ENCODE measurements at regions of chr1 and their contacts with region 1.

Region 1: DNA sequence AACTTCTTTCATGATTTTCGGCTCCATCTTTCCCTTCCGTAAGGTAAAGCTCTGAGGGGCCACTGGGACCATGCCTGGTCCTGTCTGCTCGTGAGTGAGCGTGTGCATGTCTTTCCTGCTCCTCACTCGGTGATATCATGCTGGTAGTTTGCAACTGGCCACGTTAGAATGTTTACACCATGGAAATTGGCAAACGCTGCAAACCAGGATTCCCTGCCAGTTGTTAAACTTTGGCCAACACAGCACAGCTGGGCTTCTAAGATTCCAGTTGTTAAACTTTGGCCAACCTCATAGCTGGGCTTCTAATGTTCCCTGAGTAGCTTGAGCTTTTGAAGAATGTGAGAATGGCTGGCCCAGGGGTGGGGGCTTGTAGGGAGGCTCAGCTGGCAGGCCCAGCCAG is 68.0 kb upstream of the ACTL8 start:
- DNase-seq: no peak
- H3K4me3 ChIP-seq: no peak overlapping the region
- H3K27ac ChIP-seq: no peak overlapping the region
- H3K4me1 ChIP-seq: peaks cover 4% of the 10 kb centered on the region
- H3K27me3 ChIP-seq: no peaks in the 10 kb centered on the region
- CTCF ChIP-seq: no peak

Region 2: GRCh38 chr1:17348125-17348979 is 338.8 kb before region 1 on chr1:
- CTCF ChIA-PET with region 1: no interaction called
- POLR2A ChIA-PET with region 1: no interaction called
- intact Hi-C with region 1: no loop called
- DNase-seq: no peak
- H3K4me3 ChIP-seq: no peak overlapping the region
- H3K27ac ChIP-seq: no peak overlapping the region
- H3K4me1 ChIP-seq: no peaks in the 10 kb centered on the region
- H3K27me3 ChIP-seq: no peaks in the 10 kb centered on the region
- CTCF ChIP-seq: no peak

Region 3: GRCh38 chr1:17377334-17377953 is 309.7 kb before region 1 on chr1:
- CTCF ChIA-PET with region 1: no interaction called
- POLR2A ChIA-PET with region 1: no interaction called
- intact Hi-C with region 1: no loop called
- DNase-seq: no peak
- H3K4me3 ChIP-seq: no peak overlapping the region
- H3K27ac ChIP-seq: no peak overlapping the region
- H3K4me1 ChIP-seq: no peaks in the 10 kb centered on the region
- H3K27me3 ChIP-seq: no peaks in the 10 kb centered on the region
- CTCF ChIP-seq: no peak

Region 4: DNA sequence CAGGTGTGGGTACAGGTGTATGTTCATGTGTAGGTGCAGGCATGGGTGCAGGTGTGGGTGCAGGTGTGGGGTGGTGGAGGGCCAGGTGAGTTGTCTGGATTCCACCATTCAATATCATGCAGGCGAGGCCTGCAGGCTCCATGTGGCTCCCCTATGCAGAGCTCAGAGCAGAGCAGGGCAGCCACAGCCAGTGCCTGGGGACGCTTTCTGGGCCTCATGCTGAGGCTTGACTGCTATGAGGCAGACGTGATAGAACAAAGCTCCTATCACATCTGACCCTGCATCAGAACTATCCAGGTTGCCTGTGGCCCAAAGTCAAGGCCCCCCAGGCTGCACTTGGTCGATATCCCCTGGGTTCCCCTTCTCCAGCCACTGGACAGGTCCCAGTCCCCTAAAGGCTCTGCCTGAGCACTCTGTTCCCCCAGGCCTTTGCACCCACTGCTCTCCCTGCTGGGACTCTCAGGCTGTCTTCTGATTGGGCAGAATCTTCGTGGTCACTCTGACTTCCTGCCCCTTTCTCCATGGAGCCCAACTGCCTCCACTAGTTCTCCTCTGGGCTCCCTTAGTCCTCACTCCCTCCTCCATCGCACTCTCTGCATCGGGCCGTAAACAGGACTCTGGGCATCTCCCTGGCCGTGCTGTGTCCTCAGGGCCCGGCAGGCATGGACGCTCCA is 10.6 kb before region 1 on chr1:
- CTCF ChIA-PET with region 1: no interaction called
- POLR2A ChIA-PET with region 1: interaction called, 11 read pairs
- intact Hi-C with region 1: no loop called
- DNase-seq: peak; percentile 19
- H3K4me3 ChIP-seq: no peak overlapping the region
- H3K27ac ChIP-seq: no peak overlapping the region
- H3K4me1 ChIP-seq: peaks cover 15% of the 10 kb centered on the region
- H3K27me3 ChIP-seq: no peaks in the 10 kb centered on the region
- CTCF ChIP-seq: no peak